Mammary epithelial cell (primary cell): ENCODE measurements at regions of chr11 and their contacts with region 1.

Region 1: DNA sequence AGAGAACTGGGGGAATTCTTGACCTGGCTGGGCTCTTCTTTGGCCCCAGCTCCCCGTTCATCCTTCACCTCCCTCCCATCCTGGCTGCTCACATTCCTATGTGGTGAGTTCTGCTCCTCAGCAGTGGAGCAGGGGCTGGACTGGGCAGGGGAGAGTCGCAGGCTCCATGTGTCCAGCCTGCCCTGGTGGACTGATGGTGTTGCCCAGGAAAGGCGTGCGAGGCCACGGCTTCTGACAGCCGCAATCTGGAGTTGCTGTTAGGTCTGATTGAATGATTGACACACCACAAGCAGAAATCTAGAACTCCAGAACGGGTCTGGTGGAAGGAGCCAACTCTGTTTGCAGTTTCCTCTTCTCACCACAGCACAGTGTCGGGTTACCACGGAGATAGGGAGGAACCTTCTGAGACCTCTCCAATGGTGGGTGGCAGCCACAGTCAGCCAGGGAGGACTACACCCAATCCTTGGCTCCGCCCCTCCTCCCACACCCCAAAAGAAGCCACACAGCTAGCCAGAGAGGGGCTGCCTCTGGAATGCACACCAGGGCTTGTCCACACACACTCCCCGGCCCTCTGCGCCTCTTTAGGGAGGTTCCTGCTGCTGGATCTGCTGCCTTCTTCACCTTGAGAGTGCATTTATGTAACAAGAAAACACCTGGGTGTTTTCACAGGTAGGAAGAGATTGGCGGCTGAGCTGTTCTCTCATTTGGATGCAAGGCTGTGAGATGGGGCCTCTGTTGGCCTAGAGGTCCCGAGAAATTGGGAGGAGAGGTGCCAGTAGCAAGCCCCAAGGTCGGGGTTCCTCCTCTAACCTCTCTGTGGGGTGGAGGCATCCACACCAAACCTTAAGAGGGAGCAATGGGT is 56.4 kb upstream of the CD44 start:
- DNase-seq: peak; percentile 86
- H3K4me3 ChIP-seq: peak overlapping the region in 1 of 3 experiments; percentile 11
- H3K27ac ChIP-seq: peak overlapping the region; percentile 96
- H3K4me1 ChIP-seq: peaks cover 60% of the 10 kb centered on the region
- H3K27me3 ChIP-seq: no peaks in the 10 kb centered on the region
- CTCF ChIP-seq: peak in 1 of 2 donors; percentile 2

Region 2: GRCh38 chr11:33500861-33501479 is 1581.6 kb before region 1 on chr11:
- CTCF ChIA-PET with region 1: no interaction called
- dilution Hi-C with region 1: no loop called
- in situ Hi-C with region 1: no loop called
- intact Hi-C with region 1: no loop called
- DNase-seq: peak; percentile 31
- H3K4me3 ChIP-seq: no peak overlapping the region
- H3K27ac ChIP-seq: no peak overlapping the region
- H3K4me1 ChIP-seq: no peaks in the 10 kb centered on the region
- H3K27me3 ChIP-seq: no peaks in the 10 kb centered on the region
- CTCF ChIP-seq: no peak

Region 3: GRCh38 chr11:34680918-34681554 is 401.5 kb before region 1 on chr11:
- CTCF ChIA-PET with region 1: no interaction called
- dilution Hi-C with region 1: no loop called
- in situ Hi-C with region 1: no loop called
- intact Hi-C with region 1: loop called (anchors 5 kb)
- DNase-seq: peak; percentile 90
- H3K4me3 ChIP-seq: no peak overlapping the region
- H3K27ac ChIP-seq: peak overlapping the region; percentile 60
- H3K4me1 ChIP-seq: peaks cover 36% of the 10 kb centered on the region
- H3K27me3 ChIP-seq: no peaks in the 10 kb centered on the region
- CTCF ChIP-seq: no peak

Region 4: GRCh38 chr11:35030716-35031213 is 51.8 kb before region 1 on chr11:
- CTCF ChIA-PET with region 1: interaction called, 4 read pairs
- dilution Hi-C with region 1: loop called (anchors 5 kb)
- in situ Hi-C with region 1: no loop called
- intact Hi-C with region 1: loop called (anchors 2 kb)
- DNase-seq: peak; percentile 97
- H3K4me3 ChIP-seq: peak overlapping the region in 1 of 3 experiments; percentile 4
- H3K27ac ChIP-seq: peak overlapping the region; percentile 97
- H3K4me1 ChIP-seq: peaks cover 45% of the 10 kb centered on the region
- H3K27me3 ChIP-seq: no peaks in the 10 kb centered on the region
- CTCF ChIP-seq: no peak

Region 5: DNA sequence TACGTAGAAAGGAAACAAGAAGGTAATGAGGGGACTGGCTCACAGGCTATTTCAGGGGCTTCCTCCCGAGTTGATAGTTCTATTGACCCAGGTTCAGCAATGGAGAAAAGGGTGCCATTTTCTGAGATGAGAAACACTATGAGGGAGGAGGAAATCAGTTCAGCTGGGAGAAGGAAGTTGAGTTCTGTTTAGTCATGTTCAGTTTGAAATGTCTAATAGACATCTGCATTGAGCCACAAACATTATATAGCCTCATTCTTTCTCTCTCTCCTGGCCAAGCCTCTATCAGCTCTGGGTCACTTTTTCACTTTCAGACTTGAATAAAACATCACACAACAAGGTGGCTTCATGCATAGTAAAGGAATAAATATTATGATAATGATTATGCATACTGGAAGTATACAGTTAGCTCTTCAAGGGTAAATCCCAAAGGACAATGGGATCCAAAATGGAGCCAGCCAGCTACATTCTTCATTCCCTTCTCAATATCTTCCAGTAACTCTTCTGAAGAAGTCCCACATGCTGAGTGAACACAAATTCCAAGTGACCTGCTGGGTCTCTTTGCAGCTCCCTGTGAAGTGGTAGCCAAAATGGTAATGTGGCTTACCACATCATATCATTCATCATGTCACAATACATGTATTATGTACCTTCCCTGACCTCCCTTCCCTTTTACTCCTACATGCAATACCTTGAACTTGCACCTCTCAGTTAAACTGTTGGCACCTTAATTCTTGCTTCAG is 24.5 kb before region 1 on chr11:
- CTCF ChIA-PET with region 1: no interaction called
- dilution Hi-C with region 1: no loop called
- in situ Hi-C with region 1: no loop called
- intact Hi-C with region 1: loop called (anchors 2 kb)
- DNase-seq: no peak
- H3K4me3 ChIP-seq: no peak overlapping the region
- H3K27ac ChIP-seq: peak overlapping the region; percentile 90
- H3K4me1 ChIP-seq: peaks cover 24% of the 10 kb centered on the region
- H3K27me3 ChIP-seq: no peaks in the 10 kb centered on the region
- CTCF ChIP-seq: no peak

Region 6: GRCh38 chr11:35138943-35139721 is 56.6 kb after region 1 on chr11 and contains the start of gene CD44:
- CTCF ChIA-PET with region 1: no interaction called
- dilution Hi-C with region 1: loop called (anchors 5 kb)
- in situ Hi-C with region 1: no loop called
- intact Hi-C with region 1: loop called (anchors 2 kb)
- DNase-seq: peak; percentile 89
- H3K4me3 ChIP-seq: peak within 1 kb of the TSS; percentile 85 to 98 (median 88)
- H3K27ac ChIP-seq: peak within 1 kb of the TSS; percentile 95
- H3K4me1 ChIP-seq: peaks cover 29% of the 10 kb centered on the region
- H3K27me3 ChIP-seq: no peaks in the 10 kb centered on the region
- CTCF ChIP-seq: no peak
- total RNA-seq, gene CD44: 1,362 to 2,544 TPM